Mucosa of descending colon (tissue), 3 donors: ENCODE measurements at regions of chr6 and their contacts with region 1.

Region 1: GRCh38 chr6:49606696-49607390 is 29.8 kb downstream of the RHAG start:
- DNase-seq: peak in 1 of 3 donors; percentile 47
- ATAC-seq: peak; percentile 90
- H3K4me3 ChIP-seq: no peak overlapping the region
- H3K4me1 ChIP-seq: no peaks in the 10 kb centered on the region
- CTCF ChIP-seq: peak; percentile 62

Region 2: DNA sequence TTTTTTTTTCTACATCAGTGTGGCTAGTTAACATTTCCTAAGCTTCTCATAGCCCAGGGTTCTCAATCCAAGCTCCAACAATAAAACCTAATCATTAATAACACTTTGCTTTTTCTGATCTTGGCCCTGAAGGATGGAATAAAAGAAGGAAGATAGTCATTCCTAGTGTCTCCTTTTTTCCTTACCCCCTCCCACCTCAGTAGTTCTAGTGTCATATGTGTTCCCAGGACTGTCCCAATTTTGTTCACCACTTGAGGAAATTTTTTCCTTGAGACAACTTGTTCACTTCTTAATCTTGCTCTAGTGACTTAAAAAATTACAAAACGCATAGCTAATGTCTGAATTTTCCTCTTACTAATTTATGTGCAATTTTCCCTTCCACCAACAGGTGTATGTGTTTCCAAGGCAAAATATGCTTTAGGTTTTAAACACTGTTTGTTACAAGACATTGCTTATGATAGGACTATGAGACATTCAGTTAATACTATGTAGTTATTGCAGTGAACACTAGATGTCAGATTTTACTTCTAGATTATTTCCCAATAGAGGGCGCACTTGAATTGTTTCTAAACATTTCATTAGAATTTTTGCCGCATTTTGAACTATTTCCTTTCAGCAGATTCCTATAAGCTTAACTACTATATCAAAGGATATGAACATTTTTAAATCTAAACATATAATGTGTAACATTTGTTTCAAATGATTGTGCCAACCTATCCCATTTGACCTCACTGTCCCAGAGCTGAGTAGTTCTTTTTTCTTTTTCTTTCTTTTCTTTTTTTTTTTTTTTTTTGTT is 74.9 kb before region 1 on chr6:
- intact Hi-C with region 1: loop called in 1 of 2 experiments (anchors 2 kb)
- DNase-seq: no peak
- ATAC-seq: peak; percentile 88
- H3K4me3 ChIP-seq: no peak overlapping the region
- H3K4me1 ChIP-seq: no peaks in the 10 kb centered on the region
- CTCF ChIP-seq: peak; percentile 25